ENCODE measurements at regions of chr6 and their contacts with region 1.

Region 1: DNA sequence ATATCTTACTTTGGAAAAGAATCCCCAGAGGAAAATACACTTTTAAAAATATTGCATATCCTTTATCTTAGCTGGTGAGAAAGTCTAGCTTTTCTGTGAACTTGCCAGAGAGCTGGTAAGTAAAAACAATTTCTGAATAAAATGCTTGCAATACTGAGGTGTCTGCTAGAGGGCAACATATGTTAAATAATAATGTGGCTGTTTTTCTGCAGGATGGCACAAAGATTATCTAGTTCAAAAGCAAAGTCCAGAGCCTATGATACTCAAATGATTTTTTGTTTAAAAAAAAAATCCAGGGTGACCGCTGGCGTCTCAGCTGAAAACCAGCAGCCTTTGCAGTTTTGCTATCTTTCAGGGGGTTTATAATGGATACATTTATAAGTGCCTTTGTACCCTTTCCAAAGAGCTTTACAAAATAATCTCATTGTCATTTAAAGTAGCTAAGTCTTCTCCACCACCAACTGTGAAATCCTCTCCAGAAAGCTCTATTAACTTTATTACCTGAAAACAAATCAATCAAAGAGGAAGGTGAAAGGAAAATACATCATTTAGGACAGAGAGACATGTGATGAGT is 194.9 kb downstream of the PHACTR1 start:
- DNase-seq: peak; percentile 63
- H3K4me3 ChIP-seq: no peak overlapping the region
- H3K27ac ChIP-seq: no peak overlapping the region
- H3K4me1 ChIP-seq: no peaks in the 10 kb centered on the region
- H3K27me3 ChIP-seq: peaks cover 2 to 10% of the 10 kb centered on the region in 2 experiments
- CTCF ChIP-seq: peak; percentile 26 to 27
- POLR2A ChIP-seq: no peak

Region 2: DNA sequence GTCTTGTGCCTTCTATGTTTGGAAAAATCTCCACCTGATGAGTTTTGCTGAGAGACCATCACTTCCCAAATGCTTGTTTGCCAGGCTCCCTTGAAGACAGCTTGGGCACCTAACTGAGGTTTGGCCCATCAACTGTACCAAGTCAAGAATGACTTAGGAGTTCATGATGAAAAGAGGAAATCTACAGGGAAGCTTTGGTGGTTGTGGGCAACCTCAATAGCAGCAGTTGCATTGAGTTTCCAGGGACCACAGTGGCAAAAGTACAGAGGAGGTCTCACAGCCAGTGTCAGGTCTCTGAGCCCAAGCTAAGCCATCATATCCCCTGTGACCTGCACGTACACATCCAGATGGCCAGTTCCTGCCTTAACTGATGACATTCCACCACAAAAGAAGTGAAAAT is 244.6 kb before region 1 on chr6:
- CTCF ChIA-PET with region 1: no interaction called
- POLR2A ChIA-PET with region 1: no interaction called
- dilution Hi-C with region 1: no loop called
- intact Hi-C with region 1: no loop called
- DNase-seq: no peak
- H3K4me3 ChIP-seq: no peak overlapping the region
- H3K27ac ChIP-seq: no peak overlapping the region
- H3K4me1 ChIP-seq: no peaks in the 10 kb centered on the region
- H3K27me3 ChIP-seq: peaks cover 0 to 2% of the 10 kb centered on the region in 2 experiments
- CTCF ChIP-seq: no peak
- POLR2A ChIP-seq: no peak

Region 3: GRCh38 chr6:12890171-12890790 is 21.2 kb before region 1 on chr6:
- CTCF ChIA-PET with region 1: interaction called, 14 read pairs
- POLR2A ChIA-PET with region 1: no interaction called
- dilution Hi-C with region 1: no loop called
- intact Hi-C with region 1: no loop called
- DNase-seq: peak; percentile 3
- H3K4me3 ChIP-seq: no peak overlapping the region
- H3K27ac ChIP-seq: no peak overlapping the region
- H3K4me1 ChIP-seq: no peaks in the 10 kb centered on the region
- H3K27me3 ChIP-seq: peaks cover 0 to 10% of the 10 kb centered on the region in 2 experiments
- CTCF ChIP-seq: peak; percentile 66 to 70
- POLR2A ChIP-seq: no peak

Region 4: GRCh38 chr6:12957321-12958051 is 46.0 kb after region 1 on chr6:
- CTCF ChIA-PET with region 1: interaction called, 28 read pairs
- POLR2A ChIA-PET with region 1: no interaction called
- dilution Hi-C with region 1: no loop called
- intact Hi-C with region 1: no loop called
- DNase-seq: peak; percentile 76
- H3K4me3 ChIP-seq: peak overlapping the region; percentile 18 to 85 (median 50)
- H3K27ac ChIP-seq: peak overlapping the region; percentile 56
- H3K4me1 ChIP-seq: peaks cover 14% of the 10 kb centered on the region
- H3K27me3 ChIP-seq: no peaks in the 10 kb centered on the region
- CTCF ChIP-seq: peak in 1 of 2 donors; percentile 3
- POLR2A ChIP-seq: no peak

Region 5: DNA sequence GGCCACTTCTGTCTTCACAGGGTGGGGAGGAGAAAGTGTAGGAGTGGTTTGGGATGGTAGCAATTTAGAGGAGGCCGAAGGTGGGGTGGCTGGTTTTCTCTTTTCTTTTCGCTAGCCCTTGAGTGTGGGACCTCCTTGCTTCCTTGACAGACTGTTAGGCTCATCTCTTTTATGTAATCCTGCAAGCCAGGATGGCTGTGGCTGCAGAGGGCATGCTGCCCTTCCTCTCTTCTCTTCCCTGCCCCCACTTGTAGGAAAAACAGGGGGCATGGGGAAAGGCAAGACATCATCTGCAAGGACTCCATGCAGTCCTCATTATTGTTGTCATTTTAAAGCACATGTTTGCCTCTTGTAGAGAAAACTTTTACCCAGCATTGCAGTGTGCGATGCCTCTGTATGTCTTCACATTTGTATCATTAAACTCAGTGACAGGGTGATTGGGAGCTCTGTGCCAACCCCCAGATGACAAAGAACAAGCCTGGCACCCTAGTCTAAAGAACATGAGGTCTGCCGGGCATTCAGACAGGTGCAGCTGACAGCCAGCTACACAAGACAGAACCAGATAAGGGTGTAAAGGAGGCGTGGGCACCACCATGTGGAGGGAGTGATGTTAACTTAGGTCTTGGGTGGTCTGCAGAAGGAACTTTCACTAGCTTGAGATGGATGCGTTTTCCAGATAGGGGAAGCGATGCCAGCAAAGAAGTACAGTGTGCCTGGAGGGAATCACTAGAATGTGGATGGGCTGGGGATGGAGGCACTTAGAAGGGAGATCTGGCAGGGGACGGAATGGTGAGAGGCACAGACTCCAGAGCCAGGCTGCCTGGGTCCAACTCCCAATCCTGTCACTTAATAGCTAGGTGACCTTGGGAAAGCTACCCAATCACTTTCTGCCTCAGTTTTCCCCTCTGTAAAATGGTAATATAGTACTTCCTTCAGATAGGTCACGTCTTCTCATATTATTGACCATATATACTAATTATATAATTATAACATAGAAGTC is 209.3 kb after region 1 on chr6:
- CTCF ChIA-PET with region 1: interaction called, 11 read pairs
- POLR2A ChIA-PET with region 1: no interaction called
- dilution Hi-C with region 1: no loop called
- intact Hi-C with region 1: loop called (anchors 10 kb)
- DNase-seq: no peak
- H3K4me3 ChIP-seq: no peak overlapping the region
- H3K27ac ChIP-seq: no peak overlapping the region
- H3K4me1 ChIP-seq: no peaks in the 10 kb centered on the region
- H3K27me3 ChIP-seq: no peaks in the 10 kb centered on the region
- CTCF ChIP-seq: peak in 1 of 2 donors; percentile 1
- POLR2A ChIP-seq: no peak

Region 6: DNA sequence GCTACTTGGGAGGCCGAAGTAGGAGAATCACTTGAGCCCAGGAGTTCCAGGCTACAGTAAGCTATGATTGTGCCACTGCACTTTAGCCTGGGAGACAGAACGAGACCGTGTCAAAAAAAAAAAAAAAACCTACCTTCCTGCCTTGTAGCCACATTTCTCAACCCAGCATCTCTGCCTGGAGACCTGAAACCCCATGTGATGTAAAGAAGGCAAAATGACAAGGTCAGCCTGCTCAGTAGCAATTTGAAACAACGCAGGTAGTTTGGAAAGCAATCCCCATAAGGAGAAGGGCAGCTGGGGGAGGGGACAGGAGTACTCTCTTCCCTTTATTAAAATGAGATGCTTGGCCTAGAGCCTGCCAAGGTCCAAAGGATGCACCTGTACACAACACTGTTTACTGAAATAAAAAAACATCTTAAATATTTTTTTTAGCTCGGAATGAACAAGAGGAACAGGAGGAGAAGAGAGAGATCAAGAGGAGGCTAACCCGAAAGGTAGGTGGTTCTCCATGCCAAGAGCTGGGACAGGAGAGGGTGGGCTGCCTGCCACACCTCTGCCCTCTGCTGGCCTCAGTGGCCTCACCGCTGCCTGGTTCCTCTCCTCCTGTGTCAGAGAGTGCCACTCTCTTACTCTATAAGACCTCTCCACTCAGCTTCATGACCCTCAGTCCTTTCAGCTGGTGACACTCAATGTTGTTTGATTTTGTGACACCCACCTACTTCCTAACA is 366.5 kb after region 1 on chr6:
- CTCF ChIA-PET with region 1: interaction called, 9 read pairs
- POLR2A ChIA-PET with region 1: no interaction called
- dilution Hi-C with region 1: no loop called
- intact Hi-C with region 1: loop called (anchors 1 kb)
- DNase-seq: no peak
- H3K4me3 ChIP-seq: no peak overlapping the region
- H3K27ac ChIP-seq: no peak overlapping the region
- H3K4me1 ChIP-seq: no peaks in the 10 kb centered on the region
- H3K27me3 ChIP-seq: no peaks in the 10 kb centered on the region
- CTCF ChIP-seq: peak in 1 of 2 donors; percentile 29
- POLR2A ChIP-seq: no peak

Region 7: DNA sequence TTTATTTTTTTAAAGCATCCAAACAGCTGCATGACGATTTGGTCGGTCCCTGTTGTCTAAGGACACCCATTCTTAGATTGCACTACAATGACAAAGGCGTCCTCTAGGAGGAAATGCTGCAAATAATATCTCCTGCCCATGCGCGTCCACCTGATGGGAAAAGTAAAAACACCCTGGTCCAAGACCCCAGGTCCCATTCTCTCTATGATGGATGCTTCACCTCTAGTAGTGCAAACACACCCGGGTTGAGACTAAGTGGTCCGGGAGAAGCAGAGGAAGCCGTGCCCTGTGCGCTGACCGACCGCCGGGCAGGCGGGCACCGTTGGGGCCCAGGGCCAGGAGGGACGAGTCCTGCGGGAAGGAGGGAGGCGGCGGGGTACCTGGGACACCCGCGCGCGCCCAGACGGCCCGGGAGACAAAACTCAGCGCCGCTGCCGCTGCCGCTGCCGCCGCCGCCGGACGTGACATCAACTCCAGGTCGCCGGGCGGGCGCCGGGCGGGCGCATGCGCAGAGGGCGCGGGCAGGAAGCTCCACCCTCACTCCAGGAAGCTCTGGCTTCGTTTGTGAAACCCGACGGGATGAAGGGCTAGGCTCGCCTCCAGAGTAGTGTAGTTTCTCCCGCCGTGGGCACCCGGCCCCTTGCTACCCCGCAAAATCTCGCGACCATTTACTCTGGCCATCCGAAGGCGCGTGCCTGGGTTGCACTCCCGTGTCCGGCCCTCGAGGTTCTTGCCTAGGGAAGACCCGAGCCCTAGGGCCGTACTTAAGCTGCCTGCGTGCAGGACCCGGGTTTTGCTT is 416.8 kb after region 1 on chr6 and contains the start of gene TBC1D7:
- CTCF ChIA-PET with region 1: interaction called, 98 read pairs
- POLR2A ChIA-PET with region 1: no interaction called
- dilution Hi-C with region 1: no loop called
- intact Hi-C with region 1: loop called (anchors 1 kb)
- DNase-seq: peak; percentile 94
- H3K4me3 ChIP-seq: peak within 1 kb of the TSS; percentile 76 to 92 (median 87)
- H3K27ac ChIP-seq: peak within 1 kb of the TSS; percentile 92
- H3K4me1 ChIP-seq: peaks cover 16% of the 10 kb centered on the region
- H3K27me3 ChIP-seq: no peaks in the 10 kb centered on the region
- CTCF ChIP-seq: no peak
- POLR2A ChIP-seq: peak; percentile 94
- total RNA-seq, gene TBC1D7: 26.6 and 28.1 TPM in 2 replicates

Measured in endothelial cell of umbilical vein (primary cell).